Mammary epithelial cell (primary cell): ENCODE measurements at regions of chr15 and their contacts with region 1.

Region 1: DNA sequence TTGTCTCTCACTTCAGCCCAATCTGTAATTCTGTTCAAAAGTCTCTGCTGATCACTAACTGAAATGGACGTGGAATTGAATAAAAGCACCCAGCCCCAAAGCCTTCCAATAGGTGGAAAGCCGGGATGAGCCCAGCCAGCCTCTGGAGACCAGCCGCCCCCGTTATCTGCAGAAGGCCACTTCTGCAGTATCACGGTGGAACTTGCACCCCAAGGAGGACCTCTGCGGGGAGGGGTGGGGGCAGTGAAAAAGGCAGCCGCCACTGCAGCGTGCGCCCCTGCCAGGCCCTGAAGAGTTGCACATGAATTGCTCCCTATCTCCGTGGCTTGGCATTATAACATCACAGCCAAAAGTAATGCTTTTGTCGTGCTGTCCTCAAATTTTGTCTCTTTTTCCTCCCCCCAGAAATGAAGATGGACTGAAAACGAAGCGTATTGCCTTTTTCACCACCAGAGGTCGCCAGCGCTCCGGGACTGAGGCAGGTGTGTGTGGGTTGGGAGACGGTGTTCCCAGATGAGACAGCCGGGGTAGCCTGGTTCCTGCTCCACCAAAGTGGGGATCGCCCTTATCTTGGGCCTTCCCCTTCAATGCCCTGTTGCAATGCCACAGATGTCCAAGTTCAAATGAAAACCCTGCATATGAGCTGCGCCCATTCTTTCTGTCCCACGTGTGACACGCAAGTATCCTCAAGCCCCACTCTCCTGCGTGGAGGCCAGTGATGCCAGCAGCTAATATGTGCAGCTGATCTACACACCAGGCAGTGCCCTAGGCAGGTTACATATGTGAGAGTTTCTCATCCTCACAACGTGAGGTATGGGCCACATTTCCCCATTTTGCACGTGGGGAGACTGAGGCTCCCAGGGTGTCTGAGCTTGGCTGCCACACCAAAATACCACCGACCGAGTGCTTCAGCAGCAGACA is 96.0 kb downstream of the LRRK1 start:
- DNase-seq: peak; percentile 52
- H3K4me3 ChIP-seq: no peak overlapping the region
- H3K27ac ChIP-seq: no peak overlapping the region
- H3K4me1 ChIP-seq: no peaks in the 10 kb centered on the region
- H3K27me3 ChIP-seq: no peaks in the 10 kb centered on the region
- CTCF ChIP-seq: peak; percentile 95 to 96

Region 2: DNA sequence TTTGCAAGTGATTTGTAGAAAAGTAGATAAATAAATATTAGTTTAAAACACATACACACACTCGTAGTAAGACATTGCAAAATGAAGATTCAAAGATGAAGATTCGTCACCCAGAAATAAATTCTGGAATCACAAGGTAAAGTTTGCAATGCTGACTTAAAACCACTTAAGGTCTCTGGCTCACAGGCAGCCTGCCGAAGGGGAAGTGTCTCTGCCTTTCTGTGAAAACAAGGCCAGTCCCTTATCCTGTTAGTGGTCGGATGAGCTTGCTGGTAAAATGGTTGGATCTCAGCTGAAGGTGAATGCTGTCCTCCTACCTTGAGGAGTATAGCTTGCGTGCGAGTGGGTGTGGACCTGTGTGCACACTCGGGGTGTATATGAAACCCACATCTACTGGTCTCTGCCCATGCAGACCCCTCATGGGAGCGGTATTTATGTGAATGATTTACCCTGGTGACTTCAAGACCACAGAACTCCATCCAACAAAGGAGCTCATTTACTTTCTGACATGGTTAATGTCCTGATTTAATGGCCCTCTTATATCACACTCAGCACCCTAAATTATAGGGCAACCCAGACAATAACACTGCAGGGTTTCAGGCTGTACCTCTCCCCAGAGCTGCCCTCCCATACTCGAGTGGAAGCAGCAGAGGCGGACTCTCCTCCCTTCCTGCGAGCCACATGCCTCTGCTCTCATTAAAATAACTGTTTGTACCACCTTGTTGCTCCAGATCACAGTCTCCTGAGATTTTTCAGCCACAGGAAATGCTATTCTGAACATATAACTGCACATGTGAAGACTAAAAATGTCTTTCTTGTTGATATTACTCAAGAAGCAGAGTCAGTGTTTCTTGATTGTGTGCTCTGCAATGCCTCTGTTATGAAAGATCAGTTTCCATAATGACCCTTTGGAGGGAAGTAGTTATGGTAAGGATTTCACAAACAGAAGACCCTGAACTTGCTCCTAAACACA is 181.5 kb before region 1 on chr15:
- CTCF ChIA-PET with region 1: no interaction called
- dilution Hi-C with region 1: no loop called
- in situ Hi-C with region 1: no loop called
- intact Hi-C with region 1: no loop called
- DNase-seq: no peak
- H3K4me3 ChIP-seq: no peak overlapping the region
- H3K27ac ChIP-seq: no peak overlapping the region
- H3K4me1 ChIP-seq: peaks cover 10% of the 10 kb centered on the region
- H3K27me3 ChIP-seq: no peaks in the 10 kb centered on the region
- CTCF ChIP-seq: no peak

Region 3: DNA sequence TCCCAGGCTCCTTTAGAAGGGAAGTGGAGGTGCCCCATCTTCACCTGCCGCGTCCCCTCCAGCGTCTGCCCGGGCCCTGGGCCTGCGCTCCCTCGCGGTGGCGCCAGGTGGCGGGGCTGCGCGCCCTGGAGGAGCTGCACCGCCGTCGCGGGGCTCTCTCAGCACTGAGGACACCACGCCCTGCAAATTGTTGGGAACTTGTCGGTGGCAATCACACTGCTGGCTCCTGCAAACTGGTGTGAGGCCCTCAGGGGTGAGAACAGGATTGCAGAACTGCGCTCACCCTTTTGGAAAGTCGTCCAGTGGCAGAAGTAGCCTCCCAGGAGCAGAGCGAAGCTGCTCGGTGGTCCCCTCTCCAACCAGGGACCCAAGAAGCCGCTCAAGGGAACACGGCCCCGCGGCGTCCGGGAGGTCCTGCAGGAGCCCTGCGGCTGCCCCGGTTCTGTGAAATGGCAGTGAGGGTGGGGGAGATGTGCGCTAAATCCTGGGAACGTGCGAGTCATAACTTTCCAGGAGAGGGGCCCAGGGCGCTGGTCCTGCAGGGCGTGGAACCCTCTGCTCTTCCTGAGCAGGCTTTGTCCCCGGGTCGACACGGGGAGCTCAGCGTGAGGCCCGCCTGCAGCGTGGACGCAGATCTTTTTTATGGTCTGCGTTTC is 97.0 kb before region 1 on chr15:
- CTCF ChIA-PET with region 1: no interaction called
- dilution Hi-C with region 1: no loop called
- in situ Hi-C with region 1: no loop called
- intact Hi-C with region 1: no loop called
- DNase-seq: peak; percentile 77
- H3K4me3 ChIP-seq: peak overlapping the region; percentile 64 to 72 (median 67)
- H3K27ac ChIP-seq: peak overlapping the region; percentile 48
- H3K4me1 ChIP-seq: peaks cover 39% of the 10 kb centered on the region
- H3K27me3 ChIP-seq: no peaks in the 10 kb centered on the region
- CTCF ChIP-seq: peak; percentile 83 to 94

Region 4: GRCh38 chr15:101070502-101071273 is 55.5 kb after region 1 on chr15:
- CTCF ChIA-PET with region 1: no interaction called
- dilution Hi-C with region 1: no loop called
- in situ Hi-C with region 1: no loop called
- intact Hi-C with region 1: loop called (anchors 1 kb)
- DNase-seq: peak; percentile 90
- H3K4me3 ChIP-seq: no peak overlapping the region
- H3K27ac ChIP-seq: peak overlapping the region; percentile 90
- H3K4me1 ChIP-seq: peaks cover 32% of the 10 kb centered on the region
- H3K27me3 ChIP-seq: no peaks in the 10 kb centered on the region
- CTCF ChIP-seq: no peak

Region 5: DNA sequence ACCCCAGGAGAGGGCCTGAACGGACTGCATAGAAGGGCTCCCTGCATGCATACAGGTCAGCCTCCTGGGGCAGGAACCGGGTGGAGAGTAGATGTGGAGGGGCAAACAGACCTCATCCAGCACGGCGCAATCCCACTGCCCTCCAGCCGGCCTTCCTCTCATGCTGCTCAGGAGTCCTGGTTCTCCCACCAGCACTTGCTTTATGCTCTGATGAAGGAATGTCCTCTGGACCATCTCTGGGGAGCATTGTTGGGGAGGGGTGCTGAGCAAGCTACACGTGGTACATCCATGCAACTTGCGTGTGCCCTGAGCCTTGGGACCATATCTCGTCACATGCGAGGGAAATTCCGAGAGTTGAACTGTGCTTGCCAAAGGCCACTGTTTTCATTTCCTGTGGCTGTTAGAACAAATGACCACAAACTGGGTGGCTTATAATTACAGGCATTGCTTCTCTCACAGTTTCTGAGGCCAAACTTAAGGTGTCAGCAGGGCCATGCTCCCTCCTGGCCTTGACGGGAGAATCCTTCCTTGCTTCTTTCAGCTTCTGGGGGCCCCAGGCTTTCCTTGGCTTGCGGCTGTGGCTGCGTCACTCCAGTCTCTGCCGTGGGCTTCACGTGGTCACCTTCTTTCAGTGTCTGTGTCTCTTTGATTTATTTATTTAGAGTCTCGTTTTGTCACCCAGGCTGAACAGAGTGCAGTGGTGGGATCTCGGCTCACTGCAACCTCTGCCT is 249.9 kb after region 1 on chr15:
- CTCF ChIA-PET with region 1: no interaction called
- dilution Hi-C with region 1: no loop called
- in situ Hi-C with region 1: loop called in 1 of 2 experiments (anchors 5 kb)
- intact Hi-C with region 1: no loop called
- DNase-seq: no peak
- H3K4me3 ChIP-seq: no peak overlapping the region
- H3K27ac ChIP-seq: no peak overlapping the region
- H3K4me1 ChIP-seq: peaks cover 16% of the 10 kb centered on the region
- H3K27me3 ChIP-seq: no peaks in the 10 kb centered on the region
- CTCF ChIP-seq: no peak